ENCODE measurements at regions of chr22 and their contacts with region 1.

Region 1: GRCh38 chr22:17171313-17172171 is 12.5 kb upstream of the HDHD5 start:
- DNase-seq: peak; percentile 82 to 86 (median 82)
- H3K4me3 ChIP-seq: peak overlapping the region; percentile 39 to 82 (median 70)
- H3K4me3 Mint-ChIP-seq: peak overlapping the region; percentile 83 to 87
- H3K27ac ChIP-seq: peak overlapping the region; percentile 91 to 92
- H3K27ac Mint-ChIP-seq: peak overlapping the region; percentile 87 to 96 (median 94)
- H3K4me1 ChIP-seq: peaks cover 11 to 12% of the 10 kb centered on the region in 2 donors
- H3K4me1 Mint-ChIP-seq: peaks cover 9% of the 10 kb centered on the region
- H3K27me3 ChIP-seq: no peaks in the 10 kb centered on the region
- H3K27me3 Mint-ChIP-seq: peaks cover 2 to 7% (median 2%) of the 10 kb centered on the region in 3 donors
- CTCF ChIP-seq: peak; percentile 96

Region 2: DNA sequence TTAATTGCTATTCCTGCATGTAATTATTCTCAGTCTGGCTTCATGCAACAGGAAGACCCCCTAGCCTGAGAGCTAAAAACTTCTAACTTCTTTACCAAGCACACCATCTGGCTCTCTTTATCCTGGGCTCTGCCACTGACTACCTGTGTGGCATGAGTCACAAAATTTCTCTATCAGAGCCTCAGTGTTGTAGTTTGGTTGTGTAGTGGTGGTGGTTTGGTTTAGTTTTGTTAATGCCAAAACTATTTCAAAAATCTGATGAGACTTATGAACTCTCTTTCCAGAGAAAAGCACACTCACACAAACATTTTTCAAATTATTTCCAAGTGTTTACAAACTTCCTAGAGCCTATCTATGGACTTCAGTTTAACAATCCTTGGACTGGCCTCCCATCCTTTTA is 94.3 kb before region 1 on chr22:
- intact Hi-C with region 1: loop called (anchors 2 to 5 kb)
- DNase-seq: no peak
- H3K4me3 ChIP-seq: no peak overlapping the region
- H3K4me3 Mint-ChIP-seq: no peak overlapping the region
- H3K27ac ChIP-seq: no peak overlapping the region
- H3K27ac Mint-ChIP-seq: peak overlapping the region in 4 of 7 donors; percentile 35 to 88 (median 68)
- H3K4me1 ChIP-seq: peaks cover 33 to 42% of the 10 kb centered on the region in 2 donors
- H3K4me1 Mint-ChIP-seq: peaks cover 40% of the 10 kb centered on the region
- H3K27me3 ChIP-seq: no peaks in the 10 kb centered on the region
- H3K27me3 Mint-ChIP-seq: peaks cover 2 to 5% (median 4%) of the 10 kb centered on the region in 3 donors
- CTCF ChIP-seq: no peak

Region 3: GRCh38 chr22:17237038-17237668 is 65.6 kb after region 1 on chr22:
- intact Hi-C with region 1: no loop called
- DNase-seq: peak; percentile 85 to 93 (median 87)
- H3K4me3 ChIP-seq: peak overlapping the region in 2 of 3 experiments; percentile 5 to 65
- H3K4me3 Mint-ChIP-seq: peak overlapping the region; percentile 78 to 93
- H3K27ac ChIP-seq: peak overlapping the region; percentile 84 to 97
- H3K27ac Mint-ChIP-seq: peak overlapping the region; percentile 97 to 100 (median 99)
- H3K4me1 ChIP-seq: peaks cover 41 to 58% of the 10 kb centered on the region in 2 donors
- H3K4me1 Mint-ChIP-seq: peaks cover 49% of the 10 kb centered on the region
- H3K27me3 ChIP-seq: no peaks in the 10 kb centered on the region
- H3K27me3 Mint-ChIP-seq: peaks cover 0 to 3% (median 0%) of the 10 kb centered on the region in 3 donors
- CTCF ChIP-seq: no peak